Right lobe of liver (tissue), 6 donors: ENCODE measurements at regions of chr11 and their contacts with region 1.

Region 1: DNA sequence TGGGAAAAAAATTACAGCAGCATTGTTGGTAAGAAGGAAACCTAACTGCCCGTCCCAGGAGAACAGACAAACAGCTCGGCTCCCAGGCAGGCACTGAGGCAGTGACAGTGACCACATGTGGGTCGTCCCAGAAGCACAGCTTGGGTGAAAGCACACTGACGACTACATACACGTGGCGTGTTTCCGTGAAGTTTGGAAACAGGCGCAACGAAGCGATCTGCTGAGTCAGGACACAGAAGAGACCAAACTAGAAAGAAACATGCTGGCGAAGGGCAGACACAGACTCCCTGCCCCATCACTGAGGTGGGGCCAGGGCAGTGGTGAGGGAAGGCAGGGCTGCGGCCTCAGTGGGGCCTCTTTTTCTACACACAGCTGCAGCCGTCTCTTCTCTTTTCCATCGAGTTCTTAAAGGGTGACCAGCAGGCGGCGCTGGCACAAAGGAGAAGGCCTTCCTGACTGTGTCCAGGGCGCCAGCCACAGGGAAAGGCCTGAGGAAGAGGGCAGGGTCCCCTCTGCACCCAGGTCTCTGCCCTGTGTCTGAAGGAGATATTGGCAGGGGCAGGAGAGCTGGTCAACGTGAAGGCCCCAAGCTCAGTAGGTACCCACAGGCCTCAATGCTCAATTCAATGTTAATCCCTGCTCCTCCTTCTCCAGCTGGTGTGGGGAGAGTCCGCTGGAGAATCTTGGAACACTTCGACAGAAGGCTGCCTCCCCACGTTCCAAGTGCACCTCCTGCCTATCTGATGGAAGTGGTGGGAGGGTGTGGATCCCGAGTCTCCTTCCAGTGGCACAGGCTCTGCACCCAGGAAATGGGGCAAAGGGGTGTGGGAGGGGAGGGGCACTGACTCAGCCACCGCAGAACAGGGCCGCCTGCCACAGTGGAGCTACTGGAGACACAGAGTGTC is 19.9 kb downstream of the CARS1 start:
- DNase-seq: peak; percentile 78 to 83 (median 81)
- ATAC-seq: peak; percentile 57 to 66 (median 64)
- H3K4me3 ChIP-seq: no peak overlapping the region
- H3K27ac ChIP-seq: no peak overlapping the region
- H3K4me1 ChIP-seq: peaks cover 0 to 14% (median 7%) of the 10 kb centered on the region in 4 donors
- H3K27me3 ChIP-seq: no peaks in the 10 kb centered on the region
- CTCF ChIP-seq: peak; percentile 71 to 81 (median 78)
- POLR2A ChIP-seq: no peak

Region 2: GRCh38 chr11:2992234-2992996 is 44.9 kb before region 1 on chr11 and contains the start of gene NAP1L4:
- intact Hi-C with region 1: no loop called
- DNase-seq: peak; percentile 98 to 99 (median 99)
- ATAC-seq: peak; percentile 89 to 95 (median 94)
- H3K4me3 ChIP-seq: peak within 1 kb of the TSS; percentile 66 to 93 (median 91)
- H3K27ac ChIP-seq: peak within 1 kb of the TSS; percentile 82 to 93 (median 82)
- H3K4me1 ChIP-seq: peaks cover 0 to 37% (median 17%) of the 10 kb centered on the region in 4 donors
- H3K27me3 ChIP-seq: no peaks in the 10 kb centered on the region
- CTCF ChIP-seq: no peak
- POLR2A ChIP-seq: peak; percentile 68
- total RNA-seq, gene NAP1L4: 37.6 to 76.0 (median 56.9) TPM

Region 3: DNA sequence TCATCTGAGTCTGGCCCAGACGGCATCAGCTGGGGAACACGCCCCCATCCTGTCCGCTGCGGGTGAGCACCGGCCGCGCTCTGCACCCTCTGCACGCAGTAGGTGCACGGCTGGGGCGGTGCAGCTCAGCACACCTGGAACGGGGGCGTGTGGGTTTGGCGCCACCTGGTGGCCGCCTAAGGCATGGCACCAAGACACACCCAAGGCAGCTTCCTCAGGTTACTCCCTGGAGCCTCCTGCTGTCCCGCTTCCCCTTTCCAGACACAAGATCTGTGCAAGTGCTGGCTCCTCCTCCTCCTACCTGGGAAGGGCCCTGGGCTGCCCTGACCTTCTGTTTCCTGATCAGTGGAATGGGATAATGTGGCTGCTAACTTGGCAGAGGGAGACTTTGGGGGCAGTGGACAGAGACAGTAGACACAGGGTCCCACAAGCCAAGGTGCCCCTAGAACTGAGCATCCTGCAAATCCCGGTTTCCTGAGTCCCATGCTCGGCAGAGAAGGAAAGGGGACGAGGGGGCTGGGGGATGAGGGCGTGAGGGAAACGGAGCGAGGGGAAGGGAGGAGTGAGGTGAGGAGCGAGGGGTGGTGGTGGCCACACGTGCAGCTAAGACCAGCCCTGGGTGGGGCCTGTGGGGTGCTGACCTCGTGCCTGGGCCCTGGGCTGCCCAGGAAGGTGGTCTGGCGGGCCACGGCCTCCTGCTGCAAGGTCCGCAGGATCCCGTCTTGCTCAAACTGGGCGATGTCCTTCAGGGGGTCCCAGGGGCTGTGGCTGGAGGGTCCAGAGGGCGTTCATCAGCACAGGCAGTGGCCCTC is 54.7 kb after region 1 on chr11:
- intact Hi-C with region 1: loop called (anchors 5 kb)
- DNase-seq: peak; percentile 68 to 78 (median 77)
- ATAC-seq: peak; percentile 78 to 89 (median 84)
- H3K4me3 ChIP-seq: no peak overlapping the region
- H3K27ac ChIP-seq: no peak overlapping the region
- H3K4me1 ChIP-seq: no peaks in the 10 kb centered on the region
- H3K27me3 ChIP-seq: no peaks in the 10 kb centered on the region
- CTCF ChIP-seq: peak; percentile 97 to 100 (median 98)
- POLR2A ChIP-seq: no peak

Region 4: DNA sequence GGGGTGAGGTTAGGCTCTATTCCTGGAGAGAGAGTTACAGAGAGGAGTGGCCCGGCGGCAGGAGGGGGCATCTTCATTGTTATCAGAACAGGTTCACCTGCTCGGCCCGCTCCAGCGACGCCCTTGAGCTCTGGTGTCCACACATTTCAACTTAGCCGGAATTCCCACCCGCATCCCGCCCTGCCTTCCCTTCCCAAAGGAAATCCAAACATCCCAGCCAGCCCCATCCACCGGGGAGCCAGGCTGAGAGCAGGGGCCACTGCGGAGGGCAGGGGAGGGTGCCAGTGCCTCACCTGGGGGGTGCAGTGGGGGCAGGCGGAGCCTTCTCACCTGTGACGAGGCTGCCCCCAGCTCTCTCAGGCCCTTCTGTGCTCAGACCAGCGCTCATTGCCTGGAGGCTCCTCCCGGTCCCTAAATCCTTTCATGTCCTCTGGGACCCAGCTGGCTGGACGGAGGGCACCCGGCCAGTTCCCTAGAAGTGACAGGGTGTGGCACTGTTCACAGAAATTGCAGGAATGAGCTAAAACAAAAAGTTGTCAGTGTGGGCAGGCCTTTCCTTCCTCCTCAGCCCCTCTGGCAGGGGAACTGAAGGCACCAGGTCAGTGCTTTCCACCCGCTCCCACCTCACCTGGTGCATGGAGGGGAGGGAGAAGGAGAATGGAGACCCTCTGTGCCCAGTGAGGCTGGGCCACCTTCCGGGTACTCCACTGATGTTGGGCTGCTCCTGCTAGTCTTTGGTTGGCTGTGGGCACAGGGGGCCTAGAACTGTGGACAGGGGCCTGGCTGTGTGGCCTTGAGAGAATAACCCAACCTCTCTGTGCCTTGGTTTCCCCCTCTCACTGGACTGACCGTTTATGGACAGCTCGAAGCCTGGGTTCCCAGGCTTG is 183.5 kb after region 1 on chr11:
- intact Hi-C with region 1: loop called in 1 of 2 experiments (anchors 10 kb)
- DNase-seq: peak in 1 of 3 donors; percentile 40
- ATAC-seq: no peak
- H3K4me3 ChIP-seq: no peak overlapping the region
- H3K27ac ChIP-seq: no peak overlapping the region
- H3K4me1 ChIP-seq: no peaks in the 10 kb centered on the region
- H3K27me3 ChIP-seq: no peaks in the 10 kb centered on the region
- CTCF ChIP-seq: no peak
- POLR2A ChIP-seq: no peak